GM12878 (cell line): ENCODE measurements at regions of chr6 and their contacts with region 1.

Region 1: DNA sequence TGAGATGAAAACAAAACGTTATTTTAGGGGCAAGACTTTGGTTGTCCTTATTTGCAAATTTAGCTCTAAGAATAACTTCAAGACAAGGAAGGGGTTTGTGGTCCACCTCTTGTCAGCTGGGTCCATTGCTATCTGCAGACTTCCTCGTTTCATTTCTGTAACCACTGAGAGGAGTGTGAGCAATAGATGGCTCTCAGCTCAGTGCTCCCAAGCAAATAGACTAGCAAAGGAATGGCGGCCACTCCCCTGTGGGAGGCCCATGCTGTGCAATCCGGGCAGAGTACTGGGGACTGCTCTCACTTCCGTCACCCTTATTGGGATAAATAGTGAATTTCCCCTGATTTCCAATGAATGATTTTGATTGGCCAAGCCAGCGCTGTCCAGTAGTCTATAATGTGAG is 176.6 kb downstream of the ZDHHC14 start:
- DNase-seq: peak; percentile 91
- ATAC-seq: peak; percentile 69
- H3K4me3 ChIP-seq: no peak overlapping the region
- H3K27ac ChIP-seq: no peak overlapping the region
- H3K4me1 ChIP-seq: peaks cover 58% of the 10 kb centered on the region
- H3K27me3 ChIP-seq: no peaks in the 10 kb centered on the region
- CTCF ChIP-seq: no peak
- EP300 ChIP-seq: peak; percentile 87 to 92; a peak in 3 of 4 replicates
- POLR2A ChIP-seq: no peak
- RAD21 ChIP-seq: no peak

Region 2: GRCh38 chr6:157385482-157385881 is 172.1 kb before region 1 on chr6:
- CTCF ChIA-PET with region 1: interaction called, 3 read pairs
- POLR2A ChIA-PET with region 1: interaction called, 5 read pairs
- RAD21 ChIA-PET with region 1: interaction called, 12 read pairs
- SMC1A ChIA-PET with region 1: interaction called, 11 read pairs
- in situ Hi-C with region 1: no loop called
- intact Hi-C with region 1: loop called (anchors 2 kb)
- DNase-seq: peak; percentile 44
- ATAC-seq: peak; percentile 45
- H3K4me3 ChIP-seq: no peak overlapping the region
- H3K27ac ChIP-seq: no peak overlapping the region
- H3K4me1 ChIP-seq: no peaks in the 10 kb centered on the region
- H3K27me3 ChIP-seq: peaks cover 0 to 4% of the 10 kb centered on the region in 2 experiments; a peak in 1 of 4 replicates
- CTCF ChIP-seq: no peak
- EP300 ChIP-seq: peak; percentile 48 to 52; a peak in 2 of 4 replicates
- POLR2A ChIP-seq: no peak
- RAD21 ChIP-seq: no peak

Region 3: GRCh38 chr6:157535339-157536222 is 22.0 kb before region 1 on chr6:
- CTCF ChIA-PET with region 1: interaction called, 12 read pairs
- POLR2A ChIA-PET with region 1: interaction called, 8 read pairs
- RAD21 ChIA-PET with region 1: interaction called, 22 read pairs
- SMC1A ChIA-PET with region 1: interaction called, 25 read pairs
- in situ Hi-C with region 1: no loop called
- intact Hi-C with region 1: no loop called
- DNase-seq: peak; percentile 71
- ATAC-seq: peak; percentile 85
- H3K4me3 ChIP-seq: no peak overlapping the region
- H3K27ac ChIP-seq: no peak overlapping the region; the same call in 1 of the 2 replicates
- H3K4me1 ChIP-seq: peaks cover 8% of the 10 kb centered on the region; the same call in 1 of the 2 replicates
- H3K27me3 ChIP-seq: no peaks in the 10 kb centered on the region
- CTCF ChIP-seq: no peak
- EP300 ChIP-seq: peak; percentile 85 to 91; a peak in 3 of 4 replicates
- POLR2A ChIP-seq: no peak
- RAD21 ChIP-seq: no peak

Region 4: GRCh38 chr6:157571269-157571668 is 13.7 kb after region 1 on chr6:
- CTCF ChIA-PET with region 1: interaction called, 25 read pairs
- POLR2A ChIA-PET with region 1: interaction called, 11 read pairs
- RAD21 ChIA-PET with region 1: interaction called, 121 read pairs
- SMC1A ChIA-PET with region 1: interaction called, 75 read pairs
- in situ Hi-C with region 1: no loop called
- intact Hi-C with region 1: loop called (anchors 1 kb)
- DNase-seq: peak; percentile 68
- ATAC-seq: peak; percentile 69
- H3K4me3 ChIP-seq: no peak overlapping the region
- H3K27ac ChIP-seq: peak overlapping the region; percentile 60
- H3K4me1 ChIP-seq: peaks cover 22% of the 10 kb centered on the region
- H3K27me3 ChIP-seq: no peaks in the 10 kb centered on the region
- CTCF ChIP-seq: 0 out of 6 replicates have a peak, but pooled peaks of 1 of the 3 experiments have one; percentile 9
- EP300 ChIP-seq: peak; percentile 16 to 84; a peak in 1 of 4 replicates
- POLR2A ChIP-seq: no peak
- RAD21 ChIP-seq: no peak

Region 5: GRCh38 chr6:157621406-157621805 is 63.8 kb after region 1 on chr6:
- CTCF ChIA-PET with region 1: no interaction called
- POLR2A ChIA-PET with region 1: no interaction called
- RAD21 ChIA-PET with region 1: no interaction called
- SMC1A ChIA-PET with region 1: no interaction called
- in situ Hi-C with region 1: no loop called
- intact Hi-C with region 1: no loop called
- DNase-seq: no peak
- ATAC-seq: no peak
- H3K4me3 ChIP-seq: no peak overlapping the region
- H3K27ac ChIP-seq: no peak overlapping the region
- H3K4me1 ChIP-seq: no peaks in the 10 kb centered on the region
- H3K27me3 ChIP-seq: no peaks in the 10 kb centered on the region
- CTCF ChIP-seq: no peak
- EP300 ChIP-seq: no peak
- POLR2A ChIP-seq: no peak
- RAD21 ChIP-seq: no peak

Region 6: GRCh38 chr6:157741948-157742556 is 184.5 kb after region 1 on chr6:
- CTCF ChIA-PET with region 1: no interaction called
- POLR2A ChIA-PET with region 1: no interaction called
- RAD21 ChIA-PET with region 1: no interaction called
- SMC1A ChIA-PET with region 1: no interaction called
- in situ Hi-C with region 1: no loop called
- intact Hi-C with region 1: no loop called
- DNase-seq: no peak
- ATAC-seq: no peak
- H3K4me3 ChIP-seq: no peak overlapping the region
- H3K27ac ChIP-seq: no peak overlapping the region
- H3K4me1 ChIP-seq: no peaks in the 10 kb centered on the region
- H3K27me3 ChIP-seq: peaks cover 0 to 2% of the 10 kb centered on the region in 2 experiments; a peak in 2 of 4 replicates
- CTCF ChIP-seq: no peak
- EP300 ChIP-seq: no peak
- POLR2A ChIP-seq: no peak
- RAD21 ChIP-seq: no peak